Posterior cingulate gyrus (tissue), 11 donors: ENCODE measurements at regions of chr10 and their contacts with region 1.

Region 1: DNA sequence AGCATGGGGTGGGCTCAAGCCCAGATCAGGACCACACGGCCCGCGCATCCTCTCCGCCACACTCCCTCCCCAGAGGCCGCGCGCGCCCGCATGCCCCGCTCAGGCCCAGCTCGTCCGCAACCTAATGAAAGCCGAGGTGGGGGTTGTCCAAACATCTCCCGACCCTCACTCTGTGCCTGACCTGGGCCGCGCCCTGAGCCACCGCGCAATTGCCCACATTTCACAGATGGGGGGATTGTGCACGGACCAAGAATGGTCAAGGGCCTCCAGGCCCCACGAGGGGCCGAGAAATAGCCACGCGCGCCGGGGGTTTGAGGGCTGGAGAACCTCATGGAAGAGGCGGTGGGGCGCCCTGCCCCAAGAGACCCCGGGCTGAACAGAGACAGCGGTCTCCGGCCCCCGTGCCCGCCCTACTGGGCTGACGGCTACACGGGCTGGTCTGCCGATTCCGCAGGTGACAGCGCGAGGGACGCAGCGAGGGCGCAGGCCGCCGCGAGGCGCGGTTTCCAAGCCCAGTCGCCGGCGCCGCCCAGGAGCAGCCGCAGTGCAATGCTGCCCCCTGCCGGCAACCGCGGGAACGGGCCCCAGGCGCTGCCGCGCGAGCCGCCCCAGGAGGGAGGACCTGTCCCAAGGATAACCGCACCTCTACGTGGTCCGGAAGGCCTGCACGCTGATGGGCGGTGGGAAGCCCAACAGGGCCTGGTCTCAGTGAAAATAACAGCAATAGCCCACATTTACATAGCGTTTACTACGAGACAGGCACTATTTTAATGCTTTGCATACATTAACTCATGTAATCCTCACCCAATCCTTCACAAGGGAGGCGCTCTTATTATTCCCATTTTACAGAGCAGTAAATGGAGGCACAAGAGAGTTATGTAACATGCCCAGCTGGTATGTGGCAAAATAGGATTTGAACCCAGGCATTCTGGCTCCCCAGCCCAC is 10.5 kb upstream of the GRID1 start:
- DNase-seq: peak; percentile 67 to 97 (median 84)

Region 2: GRCh38 chr10:84537447-84537931 is 1839.6 kb before region 1 on chr10:
- intact Hi-C with region 1: loop called (anchors 5 kb)
- DNase-seq: peak in 5 of 10 donors; percentile 28 to 90 (median 83)

Region 3: DNA sequence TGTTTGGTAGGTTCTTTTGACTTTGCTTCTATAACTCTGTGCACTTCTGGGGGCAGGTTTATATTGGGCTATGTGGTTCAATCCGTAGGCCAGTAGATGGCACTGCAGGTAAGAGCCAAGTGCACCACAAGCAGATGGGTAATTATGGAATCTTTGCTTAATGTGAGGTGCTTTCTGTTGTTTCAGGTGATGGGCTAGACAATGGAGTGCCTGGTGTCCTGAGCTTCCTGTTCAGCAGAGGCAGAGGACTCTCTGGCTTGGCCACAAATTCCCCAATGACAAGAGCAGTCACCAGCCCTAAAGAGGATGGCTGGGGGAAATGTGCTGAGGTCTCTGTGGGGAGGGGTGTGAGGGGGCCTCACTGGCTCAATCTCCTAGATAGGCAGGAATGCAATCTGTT is 1593.7 kb before region 1 on chr10:
- intact Hi-C with region 1: loop called (anchors 10 kb)
- DNase-seq: peak in 2 of 10 donors; percentile 15 to 77

Region 4: GRCh38 chr10:85548034-85548433 is 829.1 kb before region 1 on chr10:
- intact Hi-C with region 1: loop called (anchors 2 kb)
- DNase-seq: peak in 9 of 10 donors; percentile 27 to 93 (median 62)

Region 5: DNA sequence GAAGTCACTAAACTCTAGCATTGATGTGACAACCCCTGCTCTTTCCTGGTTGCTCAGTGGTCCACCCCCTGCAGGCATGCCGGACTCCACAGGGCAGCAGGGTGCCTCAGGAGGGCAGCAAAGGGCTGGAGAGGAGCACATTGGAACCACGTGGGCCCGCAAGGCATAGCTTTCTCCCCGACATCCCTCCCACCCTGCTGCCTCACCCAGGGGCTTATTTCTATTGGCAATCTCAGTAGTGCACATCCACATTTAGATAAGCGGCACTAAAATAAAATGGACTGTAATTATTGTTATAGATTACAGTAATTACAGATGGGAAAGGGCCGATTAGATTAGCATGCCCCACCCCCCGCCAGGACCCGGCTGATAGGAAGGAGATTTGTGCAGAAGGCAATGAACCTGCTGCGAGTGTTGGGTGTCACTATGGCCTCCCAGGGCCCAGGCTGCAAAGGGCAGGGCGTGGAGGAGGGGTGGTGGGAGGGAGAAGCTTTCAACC is 590.7 kb before region 1 on chr10:
- intact Hi-C with region 1: loop called (anchors 5 kb)
- DNase-seq: peak in 4 of 10 donors; percentile 49 to 86 (median 62)

Region 6: DNA sequence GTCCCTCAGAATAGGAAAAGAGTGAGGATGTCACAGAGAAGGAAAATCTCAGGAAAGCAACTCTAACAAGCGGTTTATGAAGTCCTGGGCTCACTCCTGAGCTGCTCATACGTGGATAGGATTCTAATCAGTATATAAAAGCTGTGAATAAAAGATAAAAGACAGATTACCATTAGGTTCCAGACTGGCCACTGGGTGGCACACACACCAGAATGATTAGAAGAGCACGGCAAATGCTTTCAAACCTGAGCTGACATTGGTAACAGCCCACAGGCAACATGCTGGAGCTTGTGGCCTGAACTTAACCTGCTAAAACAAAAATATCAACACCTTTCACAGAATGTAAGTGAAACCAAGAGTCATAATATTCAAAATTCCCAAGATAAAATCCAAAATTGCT is 381.3 kb before region 1 on chr10:
- intact Hi-C with region 1: loop called (anchors 10 kb)
- DNase-seq: peak in 6 of 10 donors; percentile 28 to 89 (median 44)

Region 7: GRCh38 chr10:86100581-86101061 is 276.5 kb before region 1 on chr10:
- intact Hi-C with region 1: loop called (anchors 10 kb)
- DNase-seq: no peak

Region 8: DNA sequence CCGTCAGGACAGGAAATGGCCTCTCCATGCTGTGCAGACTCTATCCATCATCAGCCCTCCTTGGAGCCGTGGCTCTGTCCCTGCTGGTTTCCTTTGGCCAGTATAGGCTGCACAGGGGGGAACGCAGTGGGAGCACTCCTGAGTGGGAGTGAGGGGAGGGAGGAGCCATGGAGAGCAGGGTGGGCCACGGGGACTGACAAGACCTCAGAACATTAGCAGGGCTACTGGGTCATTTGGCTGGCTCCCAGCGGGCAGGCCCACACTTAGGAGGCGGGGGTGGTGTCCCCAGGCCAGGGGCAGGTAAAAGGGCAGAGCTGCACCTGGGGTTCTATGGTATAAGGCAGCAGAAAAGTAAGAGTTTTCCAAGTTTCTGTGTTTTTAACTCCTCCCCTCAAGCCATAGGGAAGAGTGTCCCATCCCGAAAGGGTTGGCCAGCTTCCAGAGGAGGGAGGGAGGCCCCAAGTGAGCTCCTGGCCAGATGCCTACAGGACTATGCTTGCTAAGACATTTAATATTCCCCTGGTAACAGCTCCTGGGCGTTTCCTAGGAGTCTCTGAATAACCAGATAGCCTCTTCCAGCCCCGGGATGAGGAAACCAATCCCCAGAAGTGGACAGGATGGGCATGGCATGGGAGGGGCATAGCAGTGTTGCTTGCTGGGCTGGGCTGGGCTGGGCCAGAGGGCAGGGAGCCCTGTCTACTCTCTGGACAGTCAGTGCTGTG is 271.7 kb after region 1 on chr10:
- intact Hi-C with region 1: no loop called
- DNase-seq: peak in 3 of 10 donors; percentile 35 to 73 (median 73)